KBM-7 (cell line): ENCODE measurements at regions of chr20 and their contacts with region 1.

Region 1: GRCh38 chr20:49100972-49101371 is 54.9 kb downstream of the CSE1L start:
- DNase-seq: no peak

Region 2: DNA sequence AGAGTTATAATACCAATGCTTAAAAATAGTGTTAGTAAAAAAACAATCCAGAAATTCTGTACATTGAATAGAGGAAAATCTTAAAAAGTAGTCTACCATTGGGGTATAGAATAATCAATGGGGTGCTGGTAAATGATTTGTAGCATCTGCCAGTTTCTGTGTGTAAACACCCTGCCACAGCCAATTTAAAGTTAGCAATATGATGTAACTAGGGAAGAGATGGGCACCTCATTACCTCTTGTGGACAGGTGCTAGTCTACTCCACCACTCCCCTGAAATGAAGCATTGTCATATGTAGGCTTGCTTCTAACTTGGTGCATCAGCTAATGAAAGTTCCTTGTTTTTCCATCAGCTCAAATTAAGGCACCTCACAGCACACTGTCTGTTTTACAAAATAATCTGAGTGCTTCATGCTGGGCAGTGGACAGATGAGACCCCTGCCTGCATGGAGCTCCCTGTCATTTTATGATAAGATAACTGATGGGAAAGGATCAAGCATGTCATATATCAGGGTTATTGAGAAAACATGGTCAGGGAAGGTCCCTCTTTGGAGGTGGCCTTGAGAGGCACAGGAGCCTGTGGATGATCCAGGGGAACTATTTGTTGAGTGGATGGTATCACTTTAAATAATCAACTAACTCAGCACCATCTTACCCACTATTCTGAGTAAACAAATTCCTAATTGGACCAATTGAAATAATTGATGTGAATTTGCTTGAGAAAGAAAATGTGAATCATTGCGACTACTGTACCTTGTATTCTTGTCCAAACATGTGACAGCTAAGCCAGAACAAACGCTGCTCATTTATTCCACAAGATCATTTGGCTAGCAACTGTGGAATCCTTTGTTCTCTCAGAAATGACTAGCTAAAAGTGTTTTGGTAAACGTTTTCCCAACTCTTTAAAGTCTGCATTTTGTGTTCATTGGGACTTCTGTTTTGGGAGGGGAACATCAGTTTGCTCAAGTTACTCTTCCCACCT is 100.8 kb before region 1 on chr20:
- in situ Hi-C with region 1: no loop called
- DNase-seq: no peak

Region 3: DNA sequence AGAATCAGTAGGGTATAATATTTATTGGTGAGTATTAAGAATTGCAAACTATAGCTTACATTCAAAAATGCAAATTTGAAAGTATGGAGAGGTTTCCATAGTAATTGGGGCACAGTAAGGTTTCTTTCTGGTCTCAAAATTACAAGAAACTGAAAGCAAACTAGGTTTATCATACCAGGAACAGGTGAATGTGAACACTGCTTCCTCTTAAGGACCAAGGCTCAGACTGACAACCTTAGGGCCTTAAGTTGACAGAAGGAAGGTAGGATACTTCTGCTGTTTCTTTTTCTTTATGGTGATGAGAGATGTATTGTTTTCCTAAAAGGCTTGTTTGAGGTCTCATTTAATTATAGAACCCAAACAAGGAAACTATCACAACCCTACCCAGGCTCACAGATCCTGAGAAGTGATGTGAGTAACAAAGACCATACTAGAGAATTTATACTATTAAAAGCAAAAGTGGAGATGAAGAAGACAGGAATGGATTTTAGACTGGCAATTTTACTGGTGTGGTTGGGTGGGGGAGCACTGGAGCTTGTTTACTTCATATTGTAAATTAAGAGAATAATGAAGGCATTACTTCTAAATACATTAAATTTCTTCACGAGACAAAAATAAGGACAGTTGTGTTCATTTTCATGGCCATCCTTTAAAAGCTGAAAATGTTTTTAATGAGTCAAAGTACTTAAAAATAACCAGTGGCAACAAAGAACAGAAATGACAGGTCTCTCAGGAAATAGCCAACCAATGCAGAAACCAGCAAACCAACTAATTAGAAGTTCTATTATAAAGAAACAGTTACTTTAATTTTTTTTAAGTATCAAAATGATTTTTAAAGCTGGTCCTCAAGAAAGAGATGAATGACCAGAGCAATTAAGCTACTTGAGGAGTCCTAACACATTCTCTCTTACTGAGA is 65.8 kb after region 1 on chr20:
- in situ Hi-C with region 1: loop called (anchors 10 kb)
- DNase-seq: no peak

Region 4: DNA sequence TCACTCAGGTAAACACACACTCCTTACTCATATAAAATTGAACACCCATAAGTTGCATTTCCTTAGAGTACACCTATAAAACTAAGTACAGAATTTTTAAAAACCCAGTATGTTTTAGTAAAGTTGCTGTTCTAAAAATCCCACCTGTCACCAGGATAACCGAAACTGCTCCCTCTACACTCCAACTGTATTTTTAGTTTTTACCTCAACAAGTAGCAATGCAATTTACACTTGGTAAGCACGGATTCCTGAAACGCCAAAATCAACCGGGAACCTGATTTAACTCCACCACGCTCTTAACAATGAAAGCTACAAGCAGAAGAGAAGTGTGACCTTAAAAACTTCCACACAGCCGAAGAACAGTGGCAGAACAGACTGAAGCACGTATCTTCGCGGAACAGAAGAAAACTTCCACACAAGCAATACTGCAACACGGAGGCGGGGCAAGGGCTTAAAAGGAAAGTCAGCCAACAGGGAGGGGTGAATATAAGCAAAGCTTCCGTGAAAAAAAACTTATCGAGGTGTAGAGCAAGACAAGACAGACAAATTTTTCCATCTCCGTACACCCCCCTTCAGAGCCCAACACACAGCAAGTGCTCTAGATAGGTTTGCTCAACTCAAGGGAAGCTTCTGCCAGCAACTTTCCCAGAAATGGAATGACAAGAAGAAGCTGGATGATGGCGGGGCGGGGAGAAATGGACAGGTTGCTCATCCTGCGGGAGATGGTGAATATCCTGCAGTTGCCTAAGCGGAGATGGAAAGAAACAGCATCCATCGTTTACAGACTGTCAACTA is 85.8 kb after region 1 on chr20:
- in situ Hi-C with region 1: no loop called
- DNase-seq: peak; percentile 63